ENCODE measurements at regions of chr7 and their contacts with region 1.

Region 1: GRCh38 chr7:77651573-77652162 is 44.6 kb upstream of the RSBN1L start:
- DNase-seq: peak; percentile 23
- H3K4me3 Mint-ChIP-seq: no peak overlapping the region
- H3K27ac Mint-ChIP-seq: no peak overlapping the region
- H3K4me1 Mint-ChIP-seq: no peaks in the 10 kb centered on the region
- H3K27me3 Mint-ChIP-seq: no peaks in the 10 kb centered on the region

Region 2: GRCh38 chr7:77696198-77697028 is 44.7 kb after region 1 on chr7 and contains the start of gene RSBN1L:
- CTCF ChIA-PET with region 1: interaction called, 12 read pairs
- POLR2A ChIA-PET with region 1: interaction called, 5 read pairs
- DNase-seq: peak; percentile 99
- H3K4me3 Mint-ChIP-seq: peak within 1 kb of the TSS; percentile 98
- H3K27ac Mint-ChIP-seq: peak within 1 kb of the TSS; percentile 94
- H3K4me1 Mint-ChIP-seq: peaks cover 51% of the 10 kb centered on the region
- H3K27me3 Mint-ChIP-seq: no peaks in the 10 kb centered on the region
- total RNA-seq, gene RSBN1L: 28.7 to 29.5 TPM

Region 3: DNA sequence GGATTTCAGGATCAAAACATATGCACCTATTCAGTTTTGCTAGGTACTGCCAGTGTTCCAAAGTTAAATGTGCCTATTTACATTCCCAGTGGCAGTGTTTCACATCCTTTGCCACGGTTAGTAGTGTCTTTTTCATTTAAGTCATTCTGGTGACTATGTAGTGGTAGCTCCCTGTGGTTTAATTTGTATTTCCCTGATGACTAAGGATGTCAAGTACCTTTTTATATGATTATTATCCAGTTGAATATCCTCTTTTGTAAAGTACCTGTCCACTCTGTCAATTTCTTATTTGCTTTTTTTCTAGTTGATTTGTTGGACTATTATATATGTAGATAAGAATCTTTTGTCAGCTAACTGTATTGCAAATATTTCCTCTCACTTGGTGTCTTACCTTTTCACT is 101.5 kb after region 1 on chr7:
- CTCF ChIA-PET with region 1: interaction called, 28 read pairs
- POLR2A ChIA-PET with region 1: no interaction called
- DNase-seq: no peak
- H3K4me3 Mint-ChIP-seq: no peak overlapping the region
- H3K27ac Mint-ChIP-seq: no peak overlapping the region
- H3K4me1 Mint-ChIP-seq: peaks cover 26% of the 10 kb centered on the region
- H3K27me3 Mint-ChIP-seq: no peaks in the 10 kb centered on the region

Region 4: GRCh38 chr7:77759294-77759889 is 107.7 kb after region 1 on chr7:
- CTCF ChIA-PET with region 1: interaction called, 35 read pairs
- POLR2A ChIA-PET with region 1: no interaction called
- DNase-seq: peak; percentile 66
- H3K4me3 Mint-ChIP-seq: no peak overlapping the region
- H3K27ac Mint-ChIP-seq: no peak overlapping the region
- H3K4me1 Mint-ChIP-seq: peaks cover 12% of the 10 kb centered on the region
- H3K27me3 Mint-ChIP-seq: no peaks in the 10 kb centered on the region

Region 5: DNA sequence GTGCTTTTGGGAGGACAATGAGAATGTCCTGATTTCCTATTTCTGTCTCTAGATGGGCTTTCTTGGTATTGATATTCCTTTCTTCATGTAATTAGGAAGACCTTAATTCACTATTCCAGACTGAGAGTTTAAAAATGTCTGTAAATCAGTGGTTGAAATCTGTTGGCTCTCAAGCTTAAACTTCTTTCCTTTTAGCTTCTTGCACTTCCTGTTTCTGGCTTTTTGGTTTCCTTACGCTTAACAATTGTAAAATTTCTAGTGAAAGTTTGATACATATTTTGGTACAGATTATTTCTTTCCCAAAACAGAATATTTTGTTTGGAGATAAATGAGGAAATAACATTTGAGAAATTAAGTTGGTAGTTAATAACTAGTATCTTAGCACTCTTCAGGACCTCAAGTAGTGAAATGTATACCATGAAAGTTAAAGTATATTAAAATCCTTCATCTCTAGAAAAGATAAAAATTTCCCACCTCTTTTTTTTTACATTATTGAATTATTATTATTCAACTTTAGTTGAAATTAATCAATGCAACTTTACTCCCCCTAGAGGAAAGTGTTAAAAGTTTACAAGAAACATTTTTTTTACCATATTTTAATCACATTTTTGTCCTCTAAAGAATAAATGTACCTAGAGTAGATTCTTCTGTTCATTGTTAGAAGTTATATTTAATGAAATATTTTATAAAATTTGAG is 284.1 kb after region 1 on chr7:
- CTCF ChIA-PET with region 1: interaction called, 10 read pairs
- POLR2A ChIA-PET with region 1: no interaction called
- DNase-seq: no peak
- H3K4me3 Mint-ChIP-seq: peak overlapping the region; percentile 13
- H3K27ac Mint-ChIP-seq: no peak overlapping the region
- H3K4me1 Mint-ChIP-seq: peaks cover 21% of the 10 kb centered on the region
- H3K27me3 Mint-ChIP-seq: no peaks in the 10 kb centered on the region

Region 6: GRCh38 chr7:78020136-78020873 is 368.6 kb after region 1 on chr7:
- CTCF ChIA-PET with region 1: interaction called, 14 read pairs
- POLR2A ChIA-PET with region 1: no interaction called
- DNase-seq: peak; percentile 29
- H3K4me3 Mint-ChIP-seq: peak overlapping the region; percentile 61
- H3K27ac Mint-ChIP-seq: peak overlapping the region; percentile 41
- H3K4me1 Mint-ChIP-seq: peaks cover 14% of the 10 kb centered on the region
- H3K27me3 Mint-ChIP-seq: peaks cover 26% of the 10 kb centered on the region

Region 7: GRCh38 chr7:78039790-78040776 is 388.4 kb after region 1 on chr7:
- CTCF ChIA-PET with region 1: interaction called, 21 read pairs
- POLR2A ChIA-PET with region 1: no interaction called
- DNase-seq: peak; percentile 59
- H3K4me3 Mint-ChIP-seq: no peak overlapping the region
- H3K27ac Mint-ChIP-seq: no peak overlapping the region
- H3K4me1 Mint-ChIP-seq: peaks cover 2% of the 10 kb centered on the region
- H3K27me3 Mint-ChIP-seq: peaks cover 14% of the 10 kb centered on the region